MCF 10A (cell line): ENCODE measurements at regions of chr1 and their contacts with region 1.

Region 1: DNA sequence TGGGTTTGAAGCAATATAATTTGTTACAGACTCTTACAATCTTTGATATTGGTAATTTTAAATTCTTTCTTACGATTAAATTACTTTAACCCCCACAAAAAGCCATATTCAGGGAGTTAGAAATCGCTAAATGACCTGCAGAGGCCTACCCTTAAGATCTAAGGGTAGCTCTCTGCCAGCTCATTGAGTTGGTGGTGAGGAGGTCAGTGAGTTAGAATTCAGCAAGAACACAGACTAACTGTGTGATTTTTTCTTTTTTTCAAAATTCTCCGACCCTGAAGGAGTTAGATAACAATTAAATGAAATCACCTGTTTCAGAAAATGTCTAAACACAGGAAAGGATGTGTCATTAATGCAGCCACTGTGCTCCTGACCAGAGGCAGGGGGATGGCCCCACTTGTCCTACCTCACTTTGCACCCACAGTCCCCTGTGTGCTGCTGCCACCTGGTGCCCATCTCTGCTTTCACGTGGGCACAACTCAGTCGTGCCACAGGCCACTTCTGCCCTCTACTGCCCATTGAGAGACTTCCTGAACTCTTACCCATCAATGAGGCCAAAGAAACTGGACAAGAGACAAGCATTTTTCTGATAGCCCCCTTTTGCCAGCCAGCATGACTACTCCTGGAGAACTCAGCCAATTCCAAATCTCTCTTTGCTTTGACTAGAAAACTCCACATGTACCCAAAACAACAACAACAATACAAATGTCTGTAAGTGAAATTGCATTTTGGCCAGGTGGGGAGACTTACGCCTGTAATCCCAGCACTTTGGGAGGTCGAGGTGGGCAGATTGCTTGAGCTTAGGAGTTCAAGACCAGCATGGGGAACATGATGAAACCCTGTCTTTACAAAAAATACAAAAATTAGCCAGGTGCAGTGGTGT is 8.4 kb downstream of the CFAP45 start:
- DNase-seq: peak; percentile 96
- H3K4me3 Mint-ChIP-seq: no peak overlapping the region
- H3K27ac Mint-ChIP-seq: peak overlapping the region; percentile 28
- H3K4me1 Mint-ChIP-seq: peaks cover 19% of the 10 kb centered on the region
- H3K27me3 Mint-ChIP-seq: no peaks in the 10 kb centered on the region
- CTCF ChIP-seq: peak; percentile 100

Region 2: DNA sequence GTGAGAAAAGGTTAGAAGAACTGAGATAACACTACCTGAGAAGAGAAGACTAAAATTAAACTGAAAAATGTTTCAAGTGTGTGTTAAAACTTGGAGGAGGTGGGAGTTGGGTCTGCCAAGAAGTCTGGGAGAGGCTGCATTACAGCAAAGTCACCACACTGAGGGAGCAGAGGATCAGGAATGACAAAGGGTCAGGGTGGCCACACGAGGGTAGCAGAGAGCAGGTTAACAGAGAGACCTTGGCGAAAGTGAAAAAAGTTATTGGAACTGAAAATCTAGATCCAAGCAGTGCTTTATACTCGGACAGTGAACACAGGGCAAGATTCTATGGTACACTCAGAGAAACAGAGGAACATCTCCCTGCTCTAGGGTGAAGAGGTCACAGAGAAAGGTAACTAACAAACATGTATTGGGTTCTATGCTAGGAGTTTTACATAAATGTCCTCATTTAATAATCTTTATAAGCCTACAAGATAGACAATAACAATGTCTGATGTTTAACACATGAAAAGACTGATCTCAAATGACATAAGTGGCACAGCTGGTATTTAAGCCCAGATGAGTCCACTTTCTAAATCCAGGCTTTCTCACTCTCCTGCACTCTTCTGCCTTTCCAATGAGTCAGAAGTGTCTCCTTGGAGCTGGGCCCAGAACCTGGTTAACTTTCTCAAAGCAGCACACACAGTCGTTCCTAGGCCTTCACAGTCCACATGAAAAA is 730.4 kb before region 1 on chr1:
- CTCF ChIA-PET with region 1: interaction called, 134 read pairs
- POLR2A ChIA-PET with region 1: interaction called, 3 read pairs
- intact Hi-C with region 1: loop called (anchors 1 kb)
- DNase-seq: peak; percentile 99
- H3K4me3 Mint-ChIP-seq: peak overlapping the region; percentile 43
- H3K27ac Mint-ChIP-seq: peak overlapping the region; percentile 69
- H3K4me1 Mint-ChIP-seq: peaks cover 34% of the 10 kb centered on the region
- H3K27me3 Mint-ChIP-seq: peaks cover 36% of the 10 kb centered on the region
- CTCF ChIP-seq: peak; percentile 100

Region 3: DNA sequence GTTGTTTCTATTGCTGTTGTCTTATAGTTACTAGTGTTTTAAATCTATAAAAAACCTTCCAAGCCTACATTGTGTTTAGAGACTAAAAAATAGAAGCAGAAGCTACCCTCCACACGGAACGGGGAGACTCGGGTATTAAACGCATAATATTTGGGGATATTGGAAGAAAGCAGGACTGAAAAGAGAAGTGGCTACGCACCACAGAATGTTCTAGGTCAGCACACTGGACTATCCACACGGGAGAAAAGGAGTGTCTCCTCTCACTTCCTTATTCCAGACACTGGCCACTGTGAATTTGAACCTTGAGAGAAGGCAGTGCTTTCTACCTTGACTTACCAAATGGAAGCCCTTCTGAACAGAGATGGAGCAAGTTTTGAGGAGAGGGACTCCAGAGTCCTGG is 460.5 kb before region 1 on chr1:
- CTCF ChIA-PET with region 1: no interaction called
- POLR2A ChIA-PET with region 1: no interaction called
- intact Hi-C with region 1: no loop called
- DNase-seq: no peak
- H3K4me3 Mint-ChIP-seq: no peak overlapping the region
- H3K27ac Mint-ChIP-seq: no peak overlapping the region
- H3K4me1 Mint-ChIP-seq: peaks cover 15% of the 10 kb centered on the region
- H3K27me3 Mint-ChIP-seq: no peaks in the 10 kb centered on the region
- CTCF ChIP-seq: no peak

Region 4: GRCh38 chr1:159780583-159781582 is 110.6 kb before region 1 on chr1 and contains the start of gene DUSP23:
- CTCF ChIA-PET with region 1: interaction called, 253 read pairs
- POLR2A ChIA-PET with region 1: interaction called, 11 read pairs
- intact Hi-C with region 1: loop called (anchors 1 kb)
- DNase-seq: peak; percentile 100
- H3K4me3 Mint-ChIP-seq: peak within 1 kb of the TSS; percentile 87
- H3K27ac Mint-ChIP-seq: peak within 1 kb of the TSS; percentile 71
- H3K4me1 Mint-ChIP-seq: peaks cover 65% of the 10 kb centered on the region
- H3K27me3 Mint-ChIP-seq: no peaks in the 10 kb centered on the region
- CTCF ChIP-seq: peak; percentile 97
- total RNA-seq, gene DUSP23: 119 and 178 TPM in 2 replicates

Region 5: DNA sequence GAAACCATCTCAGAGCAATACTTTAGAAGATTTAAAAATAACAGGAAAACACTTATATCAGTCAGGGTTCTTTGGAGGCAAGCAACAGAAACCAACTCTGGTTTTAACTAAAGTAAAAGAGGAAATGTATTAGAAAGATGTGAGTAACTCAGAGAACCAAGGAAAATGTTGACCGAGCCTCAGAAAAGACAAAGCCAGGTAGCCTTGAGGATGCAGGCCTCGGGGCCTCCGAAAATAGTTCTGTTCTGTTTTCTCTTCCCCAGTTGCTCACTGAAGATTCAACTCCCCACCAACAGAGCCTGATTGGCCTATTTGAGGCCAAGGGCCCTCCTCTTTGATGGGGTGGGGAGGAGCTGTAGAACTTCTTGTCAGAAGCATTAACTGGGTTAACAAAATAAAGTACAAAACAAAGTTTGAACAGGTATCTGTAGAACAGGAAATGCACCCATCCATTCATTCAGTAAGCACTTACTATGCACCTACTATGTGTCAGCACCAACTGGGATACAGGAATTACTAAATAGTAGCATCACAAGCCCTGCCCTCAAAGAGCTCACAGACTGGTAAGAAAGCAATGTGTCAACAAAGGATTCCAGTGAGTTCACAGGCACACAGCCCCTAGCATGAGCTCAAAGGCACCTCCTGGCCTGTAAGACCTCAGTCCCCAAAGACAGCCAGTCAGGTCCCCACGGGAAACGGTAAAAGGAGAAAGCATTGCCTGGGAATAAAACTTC is 52.2 kb before region 1 on chr1:
- CTCF ChIA-PET with region 1: interaction called, 54 read pairs
- POLR2A ChIA-PET with region 1: no interaction called
- intact Hi-C with region 1: no loop called
- DNase-seq: no peak
- H3K4me3 Mint-ChIP-seq: no peak overlapping the region
- H3K27ac Mint-ChIP-seq: no peak overlapping the region
- H3K4me1 Mint-ChIP-seq: peaks cover 10% of the 10 kb centered on the region
- H3K27me3 Mint-ChIP-seq: no peaks in the 10 kb centered on the region
- CTCF ChIP-seq: no peak

Region 6: DNA sequence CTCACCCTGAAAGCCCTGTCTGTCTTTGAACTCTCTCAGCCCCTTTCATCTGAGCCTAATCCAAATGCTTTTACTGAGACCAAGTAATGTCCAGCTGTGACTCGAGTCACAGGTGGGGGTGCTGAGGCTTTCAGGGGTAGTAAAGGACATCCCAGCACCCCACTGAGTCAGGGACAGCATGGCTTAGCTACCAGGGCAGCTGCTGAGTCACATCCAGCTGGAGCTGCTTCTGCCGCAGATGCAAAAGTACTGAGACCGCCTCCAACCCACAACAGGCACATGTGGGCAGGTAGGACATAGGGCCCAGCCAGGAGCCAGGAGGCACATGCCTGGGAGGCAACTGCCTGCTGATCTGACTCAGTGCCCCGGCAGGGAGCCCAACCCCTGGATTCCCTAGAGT is 22.3 kb before region 1 on chr1:
- CTCF ChIA-PET with region 1: interaction called, 164 read pairs
- POLR2A ChIA-PET with region 1: interaction called, 12 read pairs
- intact Hi-C with region 1: no loop called
- DNase-seq: peak; percentile 84
- H3K4me3 Mint-ChIP-seq: peak overlapping the region; percentile 22
- H3K27ac Mint-ChIP-seq: peak overlapping the region; percentile 85
- H3K4me1 Mint-ChIP-seq: peaks cover 51% of the 10 kb centered on the region
- H3K27me3 Mint-ChIP-seq: no peaks in the 10 kb centered on the region
- CTCF ChIP-seq: no peak

Region 7: GRCh38 chr1:159936273-159936904 is 44.9 kb after region 1 on chr1:
- CTCF ChIA-PET with region 1: interaction called, 142 read pairs
- POLR2A ChIA-PET with region 1: interaction called, 6 read pairs
- intact Hi-C with region 1: loop called (anchors 2 kb)
- DNase-seq: peak; percentile 85
- H3K4me3 Mint-ChIP-seq: no peak overlapping the region
- H3K27ac Mint-ChIP-seq: no peak overlapping the region
- H3K4me1 Mint-ChIP-seq: peaks cover 22% of the 10 kb centered on the region
- H3K27me3 Mint-ChIP-seq: no peaks in the 10 kb centered on the region
- CTCF ChIP-seq: peak; percentile 100

Region 8: GRCh38 chr1:160078512-160079195 is 187.1 kb after region 1 on chr1:
- CTCF ChIA-PET with region 1: interaction called, 12 read pairs
- POLR2A ChIA-PET with region 1: no interaction called
- intact Hi-C with region 1: no loop called
- DNase-seq: peak; percentile 67
- H3K4me3 Mint-ChIP-seq: no peak overlapping the region
- H3K27ac Mint-ChIP-seq: no peak overlapping the region
- H3K4me1 Mint-ChIP-seq: no peaks in the 10 kb centered on the region
- H3K27me3 Mint-ChIP-seq: peaks cover 64% of the 10 kb centered on the region
- CTCF ChIP-seq: peak; percentile 98